Activated CD8-positive, alpha-beta T cell treated with anti-CD3 and anti-CD28 coated beads for 36 hours (primary cell): ENCODE measurements at regions of chr1 and their contacts with region 1.

Region 1: DNA sequence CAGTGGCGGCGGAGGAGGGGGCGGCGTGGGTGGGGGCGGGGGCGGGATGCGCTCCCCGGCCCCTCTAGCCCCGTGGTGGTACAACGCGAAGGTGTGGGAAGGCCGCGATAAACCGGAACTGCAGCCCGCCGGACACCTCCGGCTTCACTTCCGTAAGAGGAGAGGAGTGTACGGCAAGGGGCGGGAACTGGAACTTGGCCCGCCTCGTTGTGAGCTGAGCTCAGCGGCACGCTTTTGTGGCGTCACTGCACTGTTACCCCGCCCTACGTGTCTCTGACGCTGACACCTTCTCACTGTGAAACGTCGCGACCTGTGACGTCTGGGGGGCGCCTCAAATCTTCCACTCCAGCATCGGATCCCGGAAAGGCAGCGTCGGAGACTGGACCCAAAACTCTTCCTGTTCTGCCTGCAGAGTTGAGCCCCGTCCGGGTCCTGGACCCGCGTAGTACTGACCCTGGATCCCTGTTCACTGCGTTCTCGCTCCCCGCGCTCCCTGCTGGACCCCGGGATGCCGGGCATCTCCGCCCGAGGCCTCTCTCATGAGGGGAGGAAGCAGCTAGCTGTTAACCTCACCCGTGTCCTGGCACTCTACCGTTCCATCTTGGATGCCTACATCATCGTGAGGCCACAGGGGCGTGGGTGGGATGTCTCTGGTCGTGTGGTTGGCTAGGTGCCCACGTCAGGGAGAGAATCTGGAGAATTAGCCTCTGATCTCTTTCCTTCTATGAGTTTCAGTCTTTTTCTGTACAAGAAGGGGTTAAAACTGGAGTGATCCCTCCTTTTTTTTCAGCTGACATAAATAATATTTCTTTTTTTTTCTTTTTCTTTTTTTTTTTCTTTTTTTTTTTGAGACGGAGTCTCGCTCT is at the start of gene ISG20L2:
- DNase-seq: peak; percentile 99
- ATAC-seq: peak; percentile 94
- H3K4me3 Mint-ChIP-seq: no peak within 1 kb of the TSS
- H3K27ac Mint-ChIP-seq: no peak within 1 kb of the TSS
- H3K4me1 Mint-ChIP-seq: peaks cover 23% of the 10 kb centered on the region
- H3K27me3 Mint-ChIP-seq: no peaks in the 10 kb centered on the region
- CTCF ChIP-seq: no peak
- total RNA-seq, gene ISG20L2: 40.6 to 44.5 TPM

Region 2: GRCh38 chr1:156625436-156626078 is 103.3 kb before region 1 on chr1:
- CTCF ChIA-PET with region 1: interaction called, 44 read pairs
- POLR2A ChIA-PET with region 1: no interaction called
- intact Hi-C with region 1: no loop called
- DNase-seq: peak; percentile 74
- ATAC-seq: peak; percentile 74
- H3K4me3 Mint-ChIP-seq: peak overlapping the region; percentile 53
- H3K27ac Mint-ChIP-seq: no peak overlapping the region
- H3K4me1 Mint-ChIP-seq: peaks cover 10% of the 10 kb centered on the region
- H3K27me3 Mint-ChIP-seq: peaks cover 37% of the 10 kb centered on the region
- CTCF ChIP-seq: peak; percentile 96

Region 3: GRCh38 chr1:156677616-156678596 is 50.9 kb before region 1 on chr1:
- CTCF ChIA-PET with region 1: interaction called, 43 read pairs
- POLR2A ChIA-PET with region 1: interaction called, 4 read pairs
- intact Hi-C with region 1: no loop called
- DNase-seq: peak; percentile 53
- ATAC-seq: peak; percentile 45
- H3K4me3 Mint-ChIP-seq: no peak overlapping the region
- H3K27ac Mint-ChIP-seq: no peak overlapping the region
- H3K4me1 Mint-ChIP-seq: peaks cover 14% of the 10 kb centered on the region
- H3K27me3 Mint-ChIP-seq: peaks cover 59% of the 10 kb centered on the region
- CTCF ChIP-seq: peak; percentile 82

Region 4: DNA sequence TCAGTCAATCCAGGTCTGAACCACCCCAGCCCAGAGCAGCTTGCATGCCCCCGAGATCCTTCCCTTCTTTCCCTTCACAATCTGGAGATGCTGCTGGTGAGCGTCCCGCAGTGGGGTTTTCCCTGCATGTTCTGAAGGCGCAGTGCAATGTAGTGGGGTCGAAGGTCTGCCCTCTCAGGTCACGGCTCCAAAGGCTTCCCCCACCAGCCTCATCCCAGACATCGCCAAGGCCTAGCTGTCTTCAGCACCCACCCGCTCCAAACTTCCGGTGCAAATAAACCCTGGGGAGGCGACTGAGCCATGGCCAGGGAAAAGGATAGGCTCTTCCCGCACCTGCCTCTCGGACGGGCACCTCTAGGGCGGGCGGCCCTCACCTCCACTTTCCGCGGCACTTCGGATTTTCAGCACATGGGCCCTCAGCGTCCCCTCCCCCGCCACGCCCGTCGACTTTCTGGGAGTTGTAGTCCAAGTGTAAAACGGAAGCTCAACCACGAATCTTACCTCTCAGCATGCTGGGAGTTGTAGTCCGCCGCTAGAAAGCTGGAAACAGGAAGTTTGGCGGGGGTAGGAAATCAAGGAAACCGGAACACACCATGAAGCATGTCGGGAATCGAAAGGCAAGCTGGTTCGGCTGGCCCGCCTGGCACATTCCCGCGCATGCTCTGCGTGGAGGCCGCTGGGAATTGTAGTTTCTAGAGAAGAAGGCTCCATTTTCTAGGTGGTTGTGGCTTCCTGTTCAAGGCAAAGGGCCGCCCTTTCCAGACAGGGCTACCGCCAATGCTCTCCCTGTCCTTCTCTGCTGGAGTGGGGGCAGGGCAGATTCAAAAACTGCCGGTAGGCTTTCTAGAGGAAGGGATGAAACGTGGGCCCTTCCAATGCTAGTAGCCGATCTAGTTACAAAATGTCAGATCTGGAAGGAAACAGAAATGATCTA is 12.1 kb after region 1 on chr1 and contains the start of gene MRPL24:
- CTCF ChIA-PET with region 1: interaction called, 71 read pairs
- POLR2A ChIA-PET with region 1: interaction called, 89 read pairs
- intact Hi-C with region 1: loop called (anchors 1 kb)
- DNase-seq: peak; percentile 99
- ATAC-seq: peak; percentile 89
- H3K4me3 Mint-ChIP-seq: peak within 1 kb of the TSS; percentile 98
- H3K27ac Mint-ChIP-seq: peak within 1 kb of the TSS; percentile 95
- H3K4me1 Mint-ChIP-seq: peaks cover 50% of the 10 kb centered on the region
- H3K27me3 Mint-ChIP-seq: no peaks in the 10 kb centered on the region
- CTCF ChIP-seq: no peak
- total RNA-seq, gene MRPL24: 84.2 to 93.6 TPM

Region 5: GRCh38 chr1:156767101-156767878 is 38.5 kb after region 1 on chr1 and contains the start of gene PRCC:
- CTCF ChIA-PET with region 1: interaction called, 92 read pairs
- POLR2A ChIA-PET with region 1: interaction called, 35 read pairs
- intact Hi-C with region 1: loop called (anchors 5 kb)
- DNase-seq: peak; percentile 99
- ATAC-seq: peak; percentile 94
- H3K4me3 Mint-ChIP-seq: no peak within 1 kb of the TSS
- H3K27ac Mint-ChIP-seq: no peak within 1 kb of the TSS
- H3K4me1 Mint-ChIP-seq: peaks cover 34% of the 10 kb centered on the region
- H3K27me3 Mint-ChIP-seq: no peaks in the 10 kb centered on the region
- CTCF ChIP-seq: no peak
- total RNA-seq, gene PRCC: 69.8 to 70.6 TPM

Region 6: DNA sequence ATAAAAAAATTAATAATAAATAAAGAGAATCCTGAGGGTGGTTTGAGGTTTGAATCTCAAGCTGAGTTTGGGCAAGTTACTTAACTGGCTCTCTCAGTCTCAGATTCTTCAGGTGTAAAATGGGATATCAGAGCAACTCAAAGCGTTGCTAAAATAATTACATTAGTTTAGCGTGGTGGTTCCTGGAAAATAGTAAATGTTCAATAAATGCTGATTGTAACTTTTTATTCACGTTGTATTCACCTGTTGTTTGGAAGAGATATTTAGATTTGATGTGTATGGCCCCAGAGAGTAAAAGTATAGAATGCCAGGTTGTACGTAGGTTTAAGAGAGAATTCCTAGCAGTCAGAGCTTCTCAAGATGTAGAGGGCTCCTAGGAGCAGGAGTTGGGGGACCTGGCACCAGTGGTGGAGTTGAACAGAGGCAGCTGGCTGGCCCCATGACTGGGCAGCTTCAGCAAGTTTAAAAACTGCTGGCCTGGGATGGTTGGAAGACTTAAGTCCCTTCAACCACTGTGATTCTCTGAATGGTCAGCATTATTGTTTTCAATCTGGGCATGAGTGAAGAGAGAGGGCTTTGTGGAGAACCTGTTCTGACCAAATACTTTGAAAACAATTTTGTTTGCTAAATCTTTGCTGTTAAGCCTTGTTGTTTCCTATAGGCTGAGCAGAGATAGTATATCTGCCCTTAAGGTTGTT is 60.9 kb after region 1 on chr1:
- CTCF ChIA-PET with region 1: interaction called, 25 read pairs
- POLR2A ChIA-PET with region 1: interaction called, 3 read pairs
- intact Hi-C with region 1: no loop called
- DNase-seq: no peak
- ATAC-seq: no peak
- H3K4me3 Mint-ChIP-seq: no peak overlapping the region
- H3K27ac Mint-ChIP-seq: no peak overlapping the region
- H3K4me1 Mint-ChIP-seq: peaks cover 3% of the 10 kb centered on the region
- H3K27me3 Mint-ChIP-seq: no peaks in the 10 kb centered on the region
- CTCF ChIP-seq: no peak

Region 7: DNA sequence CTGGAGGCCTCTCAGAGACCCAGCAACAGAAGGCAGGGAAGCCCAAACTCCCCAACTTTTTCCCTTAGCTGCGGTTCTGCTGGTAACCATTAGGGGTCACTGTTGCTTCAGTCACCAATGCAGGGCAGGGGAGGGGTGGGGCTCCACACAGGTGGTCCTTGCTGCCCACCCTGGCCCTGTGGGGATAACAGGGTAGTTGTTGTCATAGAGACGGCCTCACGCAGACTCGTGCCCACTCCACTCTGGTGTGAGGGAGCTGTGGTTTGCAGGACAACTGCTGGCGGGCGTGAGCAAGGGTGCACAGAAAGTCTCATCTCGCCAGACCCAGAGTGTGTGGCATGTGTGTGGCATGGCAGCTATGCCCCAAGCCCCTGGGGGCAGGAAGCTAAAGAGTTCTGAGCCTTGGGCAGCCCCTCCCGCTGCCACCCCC is 110.2 kb after region 1 on chr1:
- CTCF ChIA-PET with region 1: interaction called, 15 read pairs
- POLR2A ChIA-PET with region 1: no interaction called
- intact Hi-C with region 1: no loop called
- DNase-seq: peak; percentile 64
- ATAC-seq: peak; percentile 54
- H3K4me3 Mint-ChIP-seq: no peak overlapping the region
- H3K27ac Mint-ChIP-seq: no peak overlapping the region
- H3K4me1 Mint-ChIP-seq: peaks cover 41% of the 10 kb centered on the region
- H3K27me3 Mint-ChIP-seq: peaks cover 39% of the 10 kb centered on the region
- CTCF ChIP-seq: peak; percentile 95